Activated T-helper 1 cell treated with anti-CD3 and anti-CD28 coated beads, Interleukin-12 subunit alpha, Interleukin-12 subunit beta, Interleukin-2, Interleukin-4 antibody, amounts not matched to agents 30 ng/mL and 10 ng/mL and 1 ng/mL, durations not matched to agents 14 hours and 24 hours and 36 hours (primary cell): ENCODE measurements at regions of chr7 and their contacts with region 1.

Region 1: DNA sequence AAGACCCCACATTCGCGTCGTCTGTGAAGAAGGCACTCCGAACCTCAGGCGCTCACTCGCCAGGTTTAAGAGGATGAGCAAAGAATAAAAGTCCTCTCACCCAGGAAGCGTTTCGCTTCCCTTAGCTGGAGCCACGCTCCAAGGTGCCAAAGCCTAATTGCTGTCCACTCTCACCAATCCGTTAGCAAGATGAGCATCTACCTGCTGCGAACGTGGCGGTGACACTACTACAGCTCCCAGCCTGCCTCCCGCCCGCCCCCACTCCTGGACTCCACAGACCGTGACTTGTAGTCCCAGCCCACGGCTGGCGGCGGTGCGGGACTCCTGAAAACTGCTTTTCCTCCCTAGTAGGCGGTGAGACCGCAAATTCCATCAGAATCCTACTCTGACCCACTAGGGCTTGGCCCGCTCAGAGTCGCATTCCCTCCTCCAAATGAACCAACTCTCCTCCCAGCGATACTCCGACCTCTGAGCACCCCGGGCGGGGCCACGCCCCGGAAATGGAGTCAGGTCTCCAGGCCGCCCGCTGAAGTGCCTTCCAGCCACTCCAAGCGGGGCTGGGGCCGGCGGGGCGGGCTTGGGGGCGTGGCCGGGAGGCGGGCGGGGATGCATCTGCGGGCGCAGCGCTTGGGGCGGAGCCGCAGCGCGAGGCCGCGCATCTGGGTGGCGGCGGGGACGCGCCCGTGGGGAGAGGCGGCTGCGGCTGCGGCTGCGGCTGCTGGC is 521 bp upstream of the PTPN12 start:
- DNase-seq: peak; percentile 93
- H3K4me3 Mint-ChIP-seq: peak overlapping the region; percentile 93
- H3K27ac Mint-ChIP-seq: peak overlapping the region; percentile 90
- H3K4me1 Mint-ChIP-seq: peaks cover 9% of the 10 kb centered on the region
- H3K27me3 Mint-ChIP-seq: peaks cover 16% of the 10 kb centered on the region

Region 2: GRCh38 chr7:77266291-77266794 is 270.2 kb before region 1 on chr7:
- intact Hi-C with region 1: loop called (anchors 2 kb)
- DNase-seq: no peak
- H3K4me3 Mint-ChIP-seq: no peak overlapping the region
- H3K27ac Mint-ChIP-seq: peak overlapping the region; percentile 62
- H3K4me1 Mint-ChIP-seq: peaks cover 21% of the 10 kb centered on the region
- H3K27me3 Mint-ChIP-seq: no peaks in the 10 kb centered on the region

Region 3: DNA sequence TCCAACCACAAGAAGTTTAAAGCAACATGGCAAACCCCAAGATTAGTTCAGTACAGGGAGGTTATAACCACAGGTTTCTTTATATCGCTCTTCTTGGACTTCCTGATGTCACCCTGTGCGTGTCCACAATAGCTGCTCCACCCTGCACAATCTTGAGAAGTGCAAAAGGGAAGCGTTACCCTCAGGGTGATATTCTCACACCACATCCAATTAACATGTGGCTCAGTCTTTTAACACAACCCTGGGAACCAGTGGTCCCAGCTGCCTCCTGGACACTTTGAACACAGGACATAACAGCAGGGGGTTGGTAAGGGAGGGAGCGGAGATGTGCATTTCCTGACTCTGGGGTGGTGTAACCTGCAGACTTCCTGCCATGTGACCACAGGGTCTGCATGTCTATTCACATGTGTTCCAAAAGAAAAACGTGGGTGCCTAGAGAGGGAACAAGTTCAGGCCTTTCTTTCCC is 185.0 kb before region 1 on chr7:
- intact Hi-C with region 1: loop called (anchors 1 kb)
- DNase-seq: peak; percentile 53
- H3K4me3 Mint-ChIP-seq: peak overlapping the region; percentile 81
- H3K27ac Mint-ChIP-seq: peak overlapping the region; percentile 90
- H3K4me1 Mint-ChIP-seq: peaks cover 58% of the 10 kb centered on the region
- H3K27me3 Mint-ChIP-seq: peaks cover 5% of the 10 kb centered on the region

Region 4: GRCh38 chr7:77687747-77688144 is 151.2 kb after region 1 on chr7:
- intact Hi-C with region 1: loop called (anchors 2 kb)
- DNase-seq: peak; percentile 1
- H3K4me3 Mint-ChIP-seq: peak overlapping the region; percentile 3
- H3K27ac Mint-ChIP-seq: peak overlapping the region; percentile 32
- H3K4me1 Mint-ChIP-seq: peaks cover 35% of the 10 kb centered on the region
- H3K27me3 Mint-ChIP-seq: no peaks in the 10 kb centered on the region

Region 5: GRCh38 chr7:77759294-77759889 is 222.8 kb after region 1 on chr7:
- intact Hi-C with region 1: loop called (anchors 5 kb)
- DNase-seq: peak; percentile 51
- H3K4me3 Mint-ChIP-seq: no peak overlapping the region
- H3K27ac Mint-ChIP-seq: no peak overlapping the region
- H3K4me1 Mint-ChIP-seq: peaks cover 25% of the 10 kb centered on the region
- H3K27me3 Mint-ChIP-seq: no peaks in the 10 kb centered on the region